Ascending aorta (tissue), 2 donors: ENCODE measurements at regions of chr22 and their contacts with region 1.

Region 1: GRCh38 chr22:46087336-46088277 is 62.7 kb upstream of the PPARA start:
- DNase-seq: peak; percentile 81 to 96
- H3K4me3 ChIP-seq: peak overlapping the region; percentile 32 to 40
- H3K27ac ChIP-seq: peak overlapping the region; percentile 96 to 100
- H3K4me1 ChIP-seq: peaks cover 46 to 95% of the 10 kb centered on the region in 2 donors
- H3K27me3 ChIP-seq: no peaks in the 10 kb centered on the region
- CTCF ChIP-seq: no peak

Region 2: DNA sequence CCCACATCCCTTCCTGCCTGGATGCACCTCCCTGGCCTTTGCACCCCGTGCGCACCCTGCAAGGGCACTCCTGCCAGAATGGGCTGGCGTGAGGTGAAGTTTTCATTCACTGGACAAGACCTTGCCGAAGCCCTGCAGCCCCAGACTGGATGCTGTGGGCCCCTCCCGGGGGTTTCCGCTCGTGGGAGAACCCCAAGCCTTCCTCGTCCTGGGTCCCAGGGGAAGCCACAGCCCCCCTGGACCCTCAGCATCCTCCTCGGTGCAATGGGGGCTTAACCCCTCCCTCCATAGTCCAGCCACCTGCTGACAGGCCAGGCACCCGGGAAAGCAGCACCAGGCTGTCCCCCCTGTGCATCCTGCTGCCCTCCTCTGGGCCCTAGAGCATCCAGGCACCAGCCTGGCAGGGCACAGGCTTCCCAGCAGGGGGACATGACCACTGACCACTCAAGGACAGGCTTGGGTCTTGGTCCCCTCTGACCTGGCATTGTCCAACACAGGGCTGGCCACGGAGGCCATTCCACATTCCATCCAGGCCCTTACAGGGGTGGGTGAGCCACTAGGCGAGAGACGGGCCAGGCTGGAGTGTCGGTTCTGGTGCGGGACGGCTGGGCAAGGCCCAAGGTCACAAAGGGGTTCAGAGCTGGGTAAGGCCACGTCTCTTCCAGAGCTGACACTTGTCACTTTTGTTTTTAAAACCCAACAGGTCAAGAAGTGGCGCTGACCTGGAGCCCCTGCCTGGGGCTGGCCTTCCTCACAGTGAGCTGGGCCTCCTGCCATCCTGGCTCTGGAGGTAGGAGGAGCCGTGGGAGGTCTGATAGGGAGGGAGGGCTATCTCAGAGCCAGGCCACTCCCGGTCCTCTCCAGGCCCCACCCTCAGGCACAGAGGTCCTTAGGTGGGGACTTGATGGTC is 21.2 kb after region 1 on chr22:
- intact Hi-C with region 1: loop called (anchors 1 kb)
- DNase-seq: no peak
- H3K4me3 ChIP-seq: no peak overlapping the region
- H3K27ac ChIP-seq: peak overlapping the region; percentile 94 to 100
- H3K4me1 ChIP-seq: peaks cover 60 to 92% of the 10 kb centered on the region in 2 donors
- H3K27me3 ChIP-seq: no peaks in the 10 kb centered on the region
- CTCF ChIP-seq: no peak